ENCODE measurements at regions of chr6 and their contacts with region 1.

Region 1: GRCh38 chr6:139291813-139292619 is at the start of gene TXLNB:
- DNase-seq: peak; percentile 84
- total RNA-seq, gene TXLNB: 135 TPM

Region 2: DNA sequence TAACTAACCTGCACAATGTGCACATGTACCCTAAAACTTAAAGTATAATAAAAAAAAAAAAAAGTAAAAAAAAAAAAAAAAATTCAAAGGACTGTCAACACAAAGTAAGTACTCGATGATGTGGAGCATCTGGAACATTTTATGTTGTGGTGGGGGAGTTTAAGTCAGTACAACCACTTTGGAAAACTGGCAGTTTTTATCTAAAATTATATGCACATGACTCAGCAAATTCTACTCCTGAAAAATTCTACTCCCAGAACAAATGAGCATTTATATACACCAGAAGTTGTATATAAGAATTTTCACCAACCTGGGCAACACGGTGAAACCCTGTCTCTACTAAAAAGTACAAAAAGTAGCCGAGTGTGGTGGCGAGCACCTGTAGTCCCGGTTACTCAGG is 555.4 kb before region 1 on chr6:
- intact Hi-C with region 1: no loop called
- DNase-seq: no peak

Region 3: DNA sequence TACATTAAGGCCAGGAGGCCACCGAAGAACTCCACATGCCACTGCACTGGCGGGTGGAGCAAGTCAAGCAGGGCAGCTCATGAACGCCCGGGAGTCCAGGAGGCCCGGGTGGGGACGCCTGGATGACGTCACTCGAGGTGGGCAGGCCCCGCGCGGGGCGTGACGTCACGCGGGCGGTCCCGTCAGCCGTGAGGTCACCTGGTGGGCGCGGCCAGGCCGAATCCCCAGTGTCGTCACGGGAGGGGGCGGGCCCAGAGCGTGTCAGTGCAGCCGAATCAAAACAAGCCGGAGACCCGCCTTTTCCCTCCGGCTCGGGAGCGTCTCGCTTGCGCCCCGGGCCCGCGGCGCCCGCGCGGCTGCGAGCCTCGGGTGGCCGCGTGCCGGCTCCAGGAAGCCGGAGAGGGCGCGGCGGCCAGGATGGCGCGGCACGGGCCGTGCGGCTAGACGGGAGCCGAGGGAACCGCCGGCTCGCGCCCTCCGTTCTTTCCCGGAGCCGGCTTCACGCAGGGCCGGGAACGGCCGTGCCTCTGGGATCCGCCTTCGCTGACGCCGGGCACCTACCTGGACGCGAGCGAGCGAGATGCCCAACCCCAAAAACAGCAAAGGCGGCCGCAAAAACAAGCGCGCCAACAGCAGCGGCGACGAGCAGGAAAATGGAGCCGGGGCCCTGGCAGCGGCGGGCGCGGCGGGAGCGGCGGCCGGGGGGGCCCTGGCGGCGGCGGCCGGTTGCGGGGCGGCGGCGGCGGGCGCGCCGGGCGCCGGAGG is 157.0 kb before region 1 on chr6 and contains the start of gene HECA:
- intact Hi-C with region 1: no loop called
- DNase-seq: peak; percentile 100
- total RNA-seq, gene HECA: 51.0 TPM

Region 4: DNA sequence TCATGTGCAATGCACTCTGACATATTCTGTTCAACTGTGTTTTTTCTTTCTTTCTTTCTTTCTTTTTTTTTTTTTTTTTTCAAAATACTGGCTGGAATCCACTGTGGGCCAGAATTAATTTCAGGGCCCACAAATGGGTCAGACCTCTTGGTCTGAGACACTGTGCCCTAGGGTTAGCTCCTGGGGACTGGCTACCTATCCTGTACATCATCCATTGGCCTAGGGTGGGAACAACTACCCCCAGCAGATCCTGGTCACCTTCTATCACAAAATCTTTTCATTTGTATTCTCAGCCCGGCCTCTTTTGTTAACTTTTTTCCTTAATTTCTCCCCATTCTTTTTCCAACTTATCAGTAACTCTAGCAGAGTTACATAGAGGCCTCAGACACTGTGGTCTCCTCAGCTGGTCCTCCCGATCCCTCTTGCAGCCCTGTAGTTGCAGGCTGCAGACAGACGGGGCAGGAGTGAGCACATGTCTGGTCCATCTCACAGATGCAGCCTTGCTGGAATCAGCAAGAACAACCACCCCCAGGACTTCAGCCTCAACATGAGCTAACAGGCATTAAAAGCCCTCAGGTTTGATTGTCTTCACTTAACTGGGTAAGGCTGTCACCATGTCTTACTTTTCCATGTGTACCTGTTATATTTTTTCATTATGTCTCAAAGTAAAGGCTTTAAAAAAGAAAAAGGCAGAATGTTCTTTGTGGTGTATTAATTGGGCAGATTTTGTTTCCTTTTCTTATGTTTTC is 41.5 kb before region 1 on chr6:
- intact Hi-C with region 1: loop called (anchors 5 kb)
- DNase-seq: peak; percentile 83

Region 5: DNA sequence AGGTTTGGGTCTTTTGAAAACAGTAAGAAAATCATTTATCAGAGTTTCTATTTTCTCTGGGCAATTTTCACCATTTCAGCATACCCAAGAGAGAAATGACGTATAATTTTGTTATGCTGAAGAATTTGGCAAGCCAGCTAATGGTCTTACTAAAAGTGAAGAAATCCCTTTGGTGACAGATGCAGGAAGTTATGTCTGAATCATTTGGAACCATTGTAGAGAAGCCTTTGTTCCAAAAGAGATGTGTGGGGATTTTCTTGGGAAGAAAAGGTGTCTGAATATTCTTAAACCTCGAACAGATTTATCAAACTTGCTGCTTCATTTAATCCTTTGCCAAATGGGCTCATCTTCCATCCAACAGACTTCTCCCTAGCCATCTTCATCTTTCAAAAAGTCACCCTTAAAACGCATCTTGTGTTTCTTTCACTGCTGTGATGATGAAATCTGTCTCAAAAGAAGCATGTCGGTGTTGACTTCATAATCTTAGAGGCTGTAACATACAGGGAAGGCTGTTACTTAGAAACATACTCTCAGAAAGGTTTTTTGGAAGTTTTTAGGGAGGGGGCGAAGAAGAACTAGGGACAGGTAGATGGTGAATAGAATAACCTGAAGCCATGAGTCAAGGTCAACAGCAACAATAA is 42.9 kb after region 1 on chr6:
- intact Hi-C with region 1: loop called (anchors 5 kb)
- DNase-seq: no peak